T-cell (primary cell): ENCODE measurements at regions of chr17 and their contacts with region 1.

Region 1: GRCh38 chr17:68290955-68291843 is at the starts of genes ARSG and SLC16A6:
- DNase-seq: peak; percentile 76 to 93 (median 83)
- ATAC-seq: peak; percentile 59 to 64 (median 62)
- H3K4me3 ChIP-seq: peak within 1 kb of the TSS; percentile 84 to 95
- H3K4me3 Mint-ChIP-seq: peak within 1 kb of the TSS; percentile 98 to 99 (median 98)
- H3K27ac ChIP-seq: peak within 1 kb of the TSS; percentile 97
- H3K27ac Mint-ChIP-seq: peak within 1 kb of the TSS; percentile 96 to 99
- H3K4me1 ChIP-seq: peaks cover 18 to 69% of the 10 kb centered on the region in 2 experiments
- H3K4me1 Mint-ChIP-seq: peaks cover 54 to 72% (median 61%) of the 10 kb centered on the region in 3 donors
- H3K27me3 ChIP-seq: no peaks in the 10 kb centered on the region
- H3K27me3 Mint-ChIP-seq: no peaks in the 10 kb centered on the region
- total RNA-seq, gene ARSG: 14.5 to 22.9 (median 17.8) TPM
- total RNA-seq, gene SLC16A6: 4.4 to 10.5 (median 7.0) TPM

Region 2: DNA sequence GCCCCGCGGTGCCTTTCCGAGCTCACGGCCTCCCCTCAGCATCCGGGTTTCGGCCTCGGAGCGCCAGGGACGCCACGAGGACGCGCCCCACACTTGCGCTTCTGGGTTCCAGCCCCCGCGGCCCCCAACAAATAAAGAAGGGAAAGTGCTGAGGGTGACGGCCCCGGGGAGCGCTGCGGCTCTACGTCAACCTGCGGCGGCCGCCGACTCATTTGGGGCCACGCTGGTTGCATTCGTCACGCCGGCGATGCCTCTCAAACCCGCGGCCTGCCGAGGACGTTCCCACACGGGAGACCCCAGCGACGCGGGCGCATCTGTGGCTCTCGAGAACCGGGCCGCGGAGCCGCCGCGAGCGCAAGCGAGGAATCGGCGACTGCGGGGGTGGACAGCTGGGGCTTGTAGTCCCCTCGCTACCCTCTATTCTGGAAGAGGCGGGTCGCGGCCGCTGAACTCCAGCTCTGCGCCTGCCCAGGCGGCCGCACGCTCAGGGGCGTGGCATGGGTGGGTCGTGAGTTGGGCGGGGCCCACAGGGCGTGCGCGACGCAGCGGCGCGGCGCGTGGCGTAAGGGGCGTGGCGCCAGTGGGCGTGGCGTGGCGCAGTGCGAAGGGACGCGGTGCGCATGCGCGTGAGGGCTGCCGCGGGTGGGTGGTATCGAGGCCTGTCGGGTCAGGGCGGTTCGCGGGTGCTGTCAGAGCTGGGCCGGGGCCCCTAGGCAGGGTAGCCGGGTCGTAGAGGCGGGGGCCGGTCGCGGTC is 43.6 kb before region 1 on chr17 and contains the start of gene AMZ2:
- CTCF ChIA-PET with region 1: interaction called in 1 of 2 experiments, 5 read pairs
- POLR2A ChIA-PET with region 1: interaction called, 3 to 11 read pairs
- DNase-seq: peak; percentile 88 to 99 (median 94)
- ATAC-seq: peak; percentile 88 to 95 (median 91)
- H3K4me3 ChIP-seq: peak within 1 kb of the TSS; percentile 69 to 77
- H3K4me3 Mint-ChIP-seq: peak within 1 kb of the TSS; percentile 78 to 93 (median 84)
- H3K27ac ChIP-seq: peak within 1 kb of the TSS; percentile 97
- H3K27ac Mint-ChIP-seq: peak within 1 kb of the TSS; percentile 92 to 99
- H3K4me1 ChIP-seq: peaks cover 4 to 42% of the 10 kb centered on the region in 2 experiments
- H3K4me1 Mint-ChIP-seq: peaks cover 30 to 56% (median 36%) of the 10 kb centered on the region in 3 donors
- H3K27me3 ChIP-seq: no peaks in the 10 kb centered on the region
- H3K27me3 Mint-ChIP-seq: no peaks in the 10 kb centered on the region
- total RNA-seq, gene AMZ2: 50.9 to 81.8 (median 60.5) TPM

Region 3: DNA sequence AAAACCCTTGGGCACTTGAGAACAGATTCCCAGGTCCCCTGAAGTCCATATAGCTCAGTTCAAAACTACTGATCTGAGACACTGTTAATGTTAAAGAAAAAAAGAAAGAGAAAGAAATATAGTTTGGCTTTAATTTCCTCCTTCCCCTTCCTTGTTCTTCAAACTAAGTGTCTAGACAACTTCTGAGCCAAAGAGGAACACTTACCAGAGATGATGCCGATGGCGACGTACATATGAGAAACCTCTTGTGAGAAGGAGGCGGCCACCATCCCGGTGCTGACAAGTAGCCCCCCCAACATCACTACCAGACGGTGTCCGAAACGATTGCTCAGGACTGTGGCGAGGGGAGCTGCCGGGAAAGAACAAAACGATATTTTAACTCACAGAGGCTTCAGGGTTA is 17.5 kb before region 1 on chr17:
- CTCF ChIA-PET with region 1: interaction called in 1 of 2 experiments, 5 read pairs
- POLR2A ChIA-PET with region 1: interaction called in 1 of 2 experiments, 11 read pairs
- DNase-seq: no peak
- ATAC-seq: no peak
- H3K4me3 ChIP-seq: no peak overlapping the region
- H3K4me3 Mint-ChIP-seq: no peak overlapping the region
- H3K27ac ChIP-seq: no peak overlapping the region
- H3K27ac Mint-ChIP-seq: peak overlapping the region in 1 of 2 donors; percentile 37
- H3K4me1 ChIP-seq: no peaks in the 10 kb centered on the region
- H3K4me1 Mint-ChIP-seq: no peaks in the 10 kb centered on the region
- H3K27me3 ChIP-seq: no peaks in the 10 kb centered on the region
- H3K27me3 Mint-ChIP-seq: no peaks in the 10 kb centered on the region

Region 4: GRCh38 chr17:68390888-68391545 is 99.8 kb after region 1 on chr17:
- CTCF ChIA-PET with region 1: no interaction called
- POLR2A ChIA-PET with region 1: interaction called in 1 of 2 experiments, 10 read pairs
- DNase-seq: no peak
- ATAC-seq: no peak
- H3K4me3 ChIP-seq: no peak overlapping the region
- H3K4me3 Mint-ChIP-seq: no peak overlapping the region
- H3K27ac ChIP-seq: no peak overlapping the region
- H3K27ac Mint-ChIP-seq: no peak overlapping the region
- H3K4me1 ChIP-seq: no peaks in the 10 kb centered on the region
- H3K4me1 Mint-ChIP-seq: no peaks in the 10 kb centered on the region
- H3K27me3 ChIP-seq: no peaks in the 10 kb centered on the region
- H3K27me3 Mint-ChIP-seq: no peaks in the 10 kb centered on the region